ENCODE measurements at regions of chr9 and their contacts with region 1.

Region 1: DNA sequence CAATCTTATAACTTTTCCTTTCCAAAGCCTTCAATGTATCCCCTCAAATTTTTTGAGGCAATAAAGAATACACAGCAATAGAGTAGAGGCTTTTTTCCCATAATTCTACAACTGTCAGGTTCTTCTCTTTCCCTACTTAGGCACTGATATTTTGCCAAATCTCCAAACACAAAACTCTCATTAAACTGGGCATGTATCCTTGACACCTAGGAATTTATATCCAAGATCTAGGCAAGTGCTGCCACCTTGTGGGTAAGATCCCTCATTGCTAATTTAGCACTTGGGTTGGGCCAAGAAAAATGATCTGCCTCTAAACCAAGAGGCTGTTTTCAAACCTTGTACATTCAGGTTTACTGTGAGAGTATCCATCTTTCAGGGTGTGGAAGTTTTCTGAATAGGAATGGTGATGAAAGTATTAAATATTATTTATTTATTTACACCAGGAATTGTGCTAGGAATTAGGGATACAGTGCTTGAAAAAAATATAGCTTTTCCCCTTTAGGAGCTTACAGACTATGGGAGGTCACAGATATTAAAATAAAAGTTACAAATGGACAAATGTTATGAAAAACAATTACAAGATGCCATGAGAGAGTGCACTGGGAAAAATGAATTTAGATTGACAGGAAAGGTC is 17.6 kb downstream of the TSTD2 start:
- DNase-seq: peak; percentile 55 to 71 (median 64)
- ATAC-seq: peak; percentile 86
- H3K4me3 ChIP-seq: no peak overlapping the region
- H3K27ac ChIP-seq: no peak overlapping the region
- H3K4me1 ChIP-seq: no peaks in the 10 kb centered on the region
- H3K27me3 ChIP-seq: no peaks in the 10 kb centered on the region
- CTCF ChIP-seq: peak; percentile 68 to 85 (median 78)
- EP300 ChIP-seq: no peak
- POLR2A ChIP-seq: no peak
- RAD21 ChIP-seq: peak; percentile 77 to 87

Region 2: DNA sequence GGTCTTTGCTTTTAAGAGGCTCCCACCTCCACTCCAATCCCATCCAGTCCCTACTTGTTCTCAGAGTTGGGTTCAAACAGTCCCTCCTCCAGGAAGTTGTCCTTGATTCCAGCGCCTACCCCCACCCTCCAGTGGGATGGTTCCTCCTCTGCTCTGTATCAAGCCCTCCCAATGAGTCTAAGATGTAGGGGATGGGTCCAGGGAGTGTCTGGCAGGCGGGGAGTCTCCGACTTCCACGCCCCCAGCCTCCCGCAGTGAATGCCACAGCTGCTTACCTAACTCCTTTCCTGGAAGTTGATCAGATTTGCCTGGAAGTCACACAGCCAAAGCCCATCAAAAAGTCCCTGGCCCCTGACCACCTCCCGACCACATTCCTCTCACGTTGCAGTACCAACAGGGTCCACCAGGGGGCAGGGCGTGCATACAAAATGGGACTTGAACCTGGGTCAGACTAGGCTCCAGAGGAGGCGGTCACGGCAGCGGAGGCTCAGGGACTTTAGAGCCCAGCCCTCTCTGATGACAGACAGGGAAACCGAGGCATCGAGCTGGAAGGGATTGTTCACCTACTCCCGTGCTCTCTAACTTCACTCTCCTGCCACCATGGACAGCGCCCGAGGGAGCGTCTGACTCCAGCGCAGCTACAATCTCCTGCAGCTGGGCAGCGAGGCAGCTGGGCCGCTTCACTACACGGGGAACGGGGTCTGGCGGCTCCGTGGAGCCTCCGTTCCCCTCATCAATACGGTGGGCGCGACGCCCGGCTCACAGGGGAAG is 228.6 kb before region 1 on chr9:
- CTCF ChIA-PET with region 1: interaction called, 5 read pairs
- POLR2A ChIA-PET with region 1: interaction called, 3 read pairs
- in situ Hi-C with region 1: no loop called
- intact Hi-C with region 1: loop called (anchors 1 kb)
- DNase-seq: peak; percentile 80 to 86 (median 86)
- ATAC-seq: peak; percentile 88
- H3K4me3 ChIP-seq: peak overlapping the region; percentile 8; the same call in 1 of the 2 replicates
- H3K27ac ChIP-seq: no peak overlapping the region
- H3K4me1 ChIP-seq: peaks cover 5 to 15% of the 10 kb centered on the region in 2 experiments; a peak in 3 of 5 replicates
- H3K27me3 ChIP-seq: peaks cover 0 to 14% of the 10 kb centered on the region in 2 experiments; a peak in 3 of 5 replicates
- CTCF ChIP-seq: peak; percentile 91 to 99 (median 92)
- EP300 ChIP-seq: no peak
- POLR2A ChIP-seq: no peak
- RAD21 ChIP-seq: peak; percentile 50 to 83

Region 3: DNA sequence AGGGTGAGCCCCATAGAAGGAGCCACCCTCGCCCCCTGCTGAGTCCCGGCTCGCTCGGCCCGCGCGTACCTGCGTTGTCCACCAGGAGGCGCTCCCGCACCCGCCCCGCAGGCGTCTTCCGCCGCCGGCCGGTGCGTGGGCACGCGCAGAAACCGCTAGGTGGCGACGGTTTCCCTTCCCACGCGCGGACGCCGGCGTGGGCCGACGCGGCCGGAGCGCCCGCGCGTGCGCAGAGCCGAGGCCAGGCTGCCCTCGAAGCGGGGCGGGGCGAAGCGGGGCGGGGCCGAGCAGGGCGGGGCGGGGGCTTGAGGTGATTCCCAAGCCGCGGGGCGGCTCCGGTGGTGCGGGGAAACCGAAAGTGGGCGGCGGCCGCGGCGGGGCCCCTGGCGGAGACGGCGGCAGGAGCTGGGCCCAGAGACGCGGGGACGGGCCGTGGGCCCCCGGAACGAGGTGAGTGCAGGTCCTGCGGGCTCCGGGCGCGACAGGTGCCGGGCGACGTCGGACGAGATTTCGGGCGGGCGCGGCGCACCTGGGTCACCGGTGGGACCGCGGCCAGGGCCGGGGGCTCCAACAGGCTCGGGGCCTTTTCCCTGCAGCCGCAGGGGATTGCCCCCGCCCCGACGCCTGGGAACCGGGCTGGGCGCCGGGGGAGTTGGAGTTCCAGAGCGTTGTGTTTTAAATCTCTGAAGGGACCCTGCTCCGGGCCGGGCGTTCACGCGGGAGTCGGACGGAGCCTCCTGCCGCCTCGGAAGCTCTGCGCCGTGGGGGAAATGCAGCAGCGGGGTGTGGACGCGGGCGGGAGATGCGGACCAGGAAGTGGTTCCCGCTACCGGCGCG is 203.5 kb before region 1 on chr9 and contains the start of gene TDRD7:
- CTCF ChIA-PET with region 1: interaction called, 19 read pairs
- POLR2A ChIA-PET with region 1: interaction called, 3 read pairs
- in situ Hi-C with region 1: no loop called
- intact Hi-C with region 1: no loop called
- DNase-seq: peak; percentile 92 to 99 (median 98)
- ATAC-seq: peak; percentile 92
- H3K4me3 ChIP-seq: peak within 1 kb of the TSS; percentile 82
- H3K27ac ChIP-seq: peak within 1 kb of the TSS; percentile 38
- H3K4me1 ChIP-seq: peaks cover 9 to 12% of the 10 kb centered on the region in 2 experiments; a peak in 3 of 5 replicates
- H3K27me3 ChIP-seq: no peaks in the 10 kb centered on the region; a peak in 1 of 5 replicates
- CTCF ChIP-seq: peak; percentile 97 to 99 (median 99)
- EP300 ChIP-seq: peak; percentile 60; the same call in 1 of the 2 replicates
- POLR2A ChIP-seq: no peak
- RAD21 ChIP-seq: peak; percentile 85 to 89
- polyA plus RNA-seq, gene TDRD7: 2.2 to 2.3 TPM

Region 4: GRCh38 chr9:97468658-97469448 is 146.7 kb before region 1 on chr9:
- CTCF ChIA-PET with region 1: interaction called, 53 read pairs
- POLR2A ChIA-PET with region 1: interaction called, 8 read pairs
- in situ Hi-C with region 1: no loop called
- intact Hi-C with region 1: loop called (anchors 1 kb)
- DNase-seq: peak; percentile 65 to 88 (median 78)
- ATAC-seq: peak; percentile 100
- H3K4me3 ChIP-seq: no peak overlapping the region
- H3K27ac ChIP-seq: no peak overlapping the region
- H3K4me1 ChIP-seq: peaks cover 0 to 8% of the 10 kb centered on the region in 2 experiments; a peak in 2 of 5 replicates
- H3K27me3 ChIP-seq: no peaks in the 10 kb centered on the region
- CTCF ChIP-seq: peak; percentile 90 to 96 (median 96)
- EP300 ChIP-seq: no peak
- POLR2A ChIP-seq: no peak
- RAD21 ChIP-seq: peak; percentile 92 to 97

Region 5: GRCh38 chr9:97632985-97633858 is 17.7 kb after region 1 on chr9 and contains the starts of genes NCBP1 and TSTD2:
- CTCF ChIA-PET with region 1: no interaction called
- POLR2A ChIA-PET with region 1: interaction called, 15 read pairs
- in situ Hi-C with region 1: no loop called
- intact Hi-C with region 1: no loop called
- DNase-seq: peak; percentile 91 to 98 (median 93)
- ATAC-seq: peak; percentile 92
- H3K4me3 ChIP-seq: peak within 1 kb of the TSS; percentile 76
- H3K27ac ChIP-seq: peak within 1 kb of the TSS; percentile 98
- H3K4me1 ChIP-seq: peaks cover 4 to 24% of the 10 kb centered on the region in 2 experiments; a peak in 3 of 5 replicates
- H3K27me3 ChIP-seq: no peaks in the 10 kb centered on the region
- CTCF ChIP-seq: no peak
- EP300 ChIP-seq: peak; percentile 24
- POLR2A ChIP-seq: peak; percentile 84
- RAD21 ChIP-seq: no peak
- polyA plus RNA-seq, gene NCBP1: 29.4 to 37.1 TPM
- polyA plus RNA-seq, gene TSTD2: 10.1 to 19.0 TPM